ENCODE measurements at regions of chr6 and their contacts with region 1.

Region 1: GRCh38 chr6:133973109-133973971 is 20.3 kb downstream of the TBPL1 start:
- DNase-seq: peak; percentile 61
- H3K4me3 Mint-ChIP-seq: no peak overlapping the region
- H3K27ac Mint-ChIP-seq: no peak overlapping the region
- H3K4me1 Mint-ChIP-seq: peaks cover 13% of the 10 kb centered on the region
- H3K27me3 Mint-ChIP-seq: no peaks in the 10 kb centered on the region

Region 2: GRCh38 chr6:133923938-133924593 is 49.3 kb before region 1 on chr6:
- intact Hi-C with region 1: loop called (anchors 1 kb)
- DNase-seq: peak; percentile 86
- H3K4me3 Mint-ChIP-seq: no peak overlapping the region
- H3K27ac Mint-ChIP-seq: no peak overlapping the region
- H3K4me1 Mint-ChIP-seq: no peaks in the 10 kb centered on the region
- H3K27me3 Mint-ChIP-seq: peaks cover 35% of the 10 kb centered on the region

Region 3: GRCh38 chr6:134009876-134010275 is 36.5 kb after region 1 on chr6:
- intact Hi-C with region 1: loop called (anchors 5 kb)
- DNase-seq: no peak
- H3K4me3 Mint-ChIP-seq: no peak overlapping the region
- H3K27ac Mint-ChIP-seq: no peak overlapping the region
- H3K4me1 Mint-ChIP-seq: peaks cover 13% of the 10 kb centered on the region
- H3K27me3 Mint-ChIP-seq: peaks cover 12% of the 10 kb centered on the region

Region 4: DNA sequence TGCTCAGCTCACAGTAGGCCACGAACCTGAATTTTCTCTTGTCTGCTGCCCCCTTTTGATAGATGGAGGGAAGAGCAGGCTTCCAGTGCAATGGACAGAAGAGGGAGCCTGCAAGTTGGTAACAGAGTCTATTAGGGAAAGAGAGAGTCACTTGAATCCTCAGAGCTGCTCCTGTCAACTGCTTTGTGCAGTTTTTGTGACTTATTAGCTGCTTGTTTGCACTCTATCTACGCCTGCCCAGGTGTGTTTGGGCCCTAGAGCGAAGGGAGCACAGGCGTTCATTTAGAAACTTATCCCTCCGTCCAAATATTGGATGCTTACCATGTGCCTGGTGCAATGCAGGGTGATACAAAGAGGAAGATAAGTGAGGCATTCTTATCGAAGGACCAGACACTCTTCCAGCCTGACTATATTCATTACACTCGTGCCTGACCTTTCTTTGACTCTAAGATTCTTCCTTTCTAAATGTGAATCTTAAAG is 90.7 kb after region 1 on chr6:
- intact Hi-C with region 1: loop called (anchors 1 kb)
- DNase-seq: peak; percentile 88
- H3K4me3 Mint-ChIP-seq: no peak overlapping the region
- H3K27ac Mint-ChIP-seq: no peak overlapping the region
- H3K4me1 Mint-ChIP-seq: no peaks in the 10 kb centered on the region
- H3K27me3 Mint-ChIP-seq: peaks cover 7% of the 10 kb centered on the region

Region 5: DNA sequence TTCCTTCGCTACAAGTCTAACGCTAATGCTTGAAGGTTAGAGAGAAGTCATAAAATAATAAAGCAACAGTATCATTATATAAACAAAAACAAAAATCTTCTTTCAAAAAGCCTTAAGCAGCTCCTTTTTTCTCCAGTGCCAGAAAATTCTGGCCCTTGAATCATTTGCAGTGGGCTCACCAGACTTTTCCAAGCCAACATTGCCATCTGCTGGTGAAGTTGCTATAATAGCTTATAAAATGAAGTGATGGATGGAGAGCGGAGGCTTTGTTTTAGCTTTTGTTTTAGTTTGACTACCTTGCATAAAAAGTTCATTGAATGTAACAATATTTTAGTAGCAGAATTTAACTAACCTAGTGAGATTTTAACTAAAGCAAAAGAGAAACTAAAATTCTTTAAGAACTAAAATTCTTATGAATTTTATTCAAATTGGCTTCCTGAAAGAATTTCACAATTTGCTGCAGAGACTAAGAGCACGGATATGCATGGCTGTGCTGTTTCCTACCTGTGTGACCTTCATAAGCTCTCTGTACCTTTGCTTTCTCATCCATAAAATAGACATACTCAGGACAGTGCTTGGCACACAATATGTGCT is 123.9 kb after region 1 on chr6:
- intact Hi-C with region 1: loop called (anchors 2 kb)
- DNase-seq: peak; percentile 89
- H3K4me3 Mint-ChIP-seq: no peak overlapping the region
- H3K27ac Mint-ChIP-seq: no peak overlapping the region
- H3K4me1 Mint-ChIP-seq: peaks cover 4% of the 10 kb centered on the region
- H3K27me3 Mint-ChIP-seq: peaks cover 33% of the 10 kb centered on the region

Measured in activated CD4-positive, alpha-beta T cell treated with anti-CD3 and anti-CD28 coated beads, Interleukin-2, amount 10 ng/mL, durations not matched to agents 24 days and 14 days (primary cell).